Lower leg skin (tissue), 4 donors: ENCODE measurements at regions of chr7 and their contacts with region 1.

Region 1: DNA sequence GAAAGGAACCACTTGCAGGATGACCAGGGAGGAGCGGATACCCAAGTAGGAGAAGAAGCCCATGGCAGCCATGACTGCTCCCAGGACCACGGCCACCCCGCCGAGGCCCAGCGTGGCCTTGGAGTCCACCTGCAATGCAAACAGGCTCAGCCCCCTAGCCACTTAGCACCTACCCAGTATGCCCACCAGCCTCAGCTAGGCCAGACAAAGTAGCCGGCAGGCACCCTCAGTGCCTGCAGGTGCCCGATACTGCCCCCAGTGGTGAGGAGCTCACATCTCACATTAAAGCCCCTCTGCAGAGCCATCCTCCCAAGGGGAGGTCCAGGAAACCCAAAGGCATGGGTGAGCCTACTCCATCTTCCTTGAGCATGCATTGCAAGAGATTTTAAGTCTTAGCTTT is 6.6 kb downstream of the NPC1L1 start:
- DNase-seq: no peak
- H3K4me3 ChIP-seq: no peak overlapping the region
- CTCF ChIP-seq: no peak
- POLR2A ChIP-seq: no peak

Region 2: GRCh38 chr7:44511863-44512468 is 22.5 kb before region 1 on chr7:
- intact Hi-C with region 1: loop called (anchors 2 kb)
- DNase-seq: no peak
- H3K4me3 ChIP-seq: no peak overlapping the region
- CTCF ChIP-seq: no peak
- POLR2A ChIP-seq: no peak